Aorta (tissue), 5 donors: ENCODE measurements at regions of chr15 and their contacts with region 1.

Region 1: DNA sequence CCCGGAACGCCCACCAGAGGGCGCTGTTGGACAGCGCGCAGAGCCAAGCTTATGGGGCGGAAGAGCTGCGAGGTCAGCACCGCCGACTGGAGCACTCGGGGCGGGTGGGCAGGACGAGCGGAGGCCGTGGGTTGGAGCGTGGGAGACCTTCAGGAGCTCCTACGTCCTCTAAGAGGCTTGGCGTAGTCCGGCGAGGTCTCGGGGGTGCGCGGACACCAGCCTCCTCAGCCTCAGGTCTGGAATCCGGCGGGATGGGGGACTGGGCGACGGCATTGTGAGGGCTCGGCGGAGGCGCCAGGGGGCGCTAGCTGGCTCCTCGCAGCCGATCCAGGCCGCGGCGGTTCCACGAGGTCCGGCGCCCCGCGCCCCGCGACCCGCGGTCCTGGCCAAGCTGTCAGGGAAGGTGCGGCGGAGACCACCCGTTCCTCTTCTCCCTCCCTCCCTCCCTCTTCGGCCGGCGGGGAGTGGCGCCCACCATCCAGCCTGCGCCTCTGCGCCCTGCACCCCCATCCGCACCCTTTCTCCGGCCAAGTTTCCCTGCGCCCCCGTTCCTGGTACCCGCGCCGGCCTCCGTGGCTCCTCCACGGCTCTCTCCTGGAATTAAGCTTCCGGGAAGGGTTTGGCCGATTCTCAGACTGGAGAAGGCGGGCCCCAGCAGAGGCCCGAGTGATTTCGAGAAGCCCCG is 24.3 kb upstream of the POLG start:
- DNase-seq: peak; percentile 83 to 93
- ATAC-seq: peak; percentile 94
- H3K4me3 ChIP-seq: no peak overlapping the region
- H3K27ac ChIP-seq: no peak overlapping the region
- H3K4me1 ChIP-seq: no peaks in the 10 kb centered on the region
- H3K27me3 ChIP-seq: peaks cover 0 to 3% of the 10 kb centered on the region in 2 donors

Region 2: GRCh38 chr15:89430530-89431341 is 71.8 kb after region 1 on chr15:
- intact Hi-C with region 1: loop called (anchors 1 to 2 kb)
- DNase-seq: peak; percentile 88 to 96
- ATAC-seq: peak; percentile 93
- H3K4me3 ChIP-seq: peak overlapping the region in 1 of 2 donors; percentile 6
- H3K27ac ChIP-seq: no peak overlapping the region
- H3K4me1 ChIP-seq: no peaks in the 10 kb centered on the region
- H3K27me3 ChIP-seq: peaks cover 0 to 2% of the 10 kb centered on the region in 2 donors

Region 3: DNA sequence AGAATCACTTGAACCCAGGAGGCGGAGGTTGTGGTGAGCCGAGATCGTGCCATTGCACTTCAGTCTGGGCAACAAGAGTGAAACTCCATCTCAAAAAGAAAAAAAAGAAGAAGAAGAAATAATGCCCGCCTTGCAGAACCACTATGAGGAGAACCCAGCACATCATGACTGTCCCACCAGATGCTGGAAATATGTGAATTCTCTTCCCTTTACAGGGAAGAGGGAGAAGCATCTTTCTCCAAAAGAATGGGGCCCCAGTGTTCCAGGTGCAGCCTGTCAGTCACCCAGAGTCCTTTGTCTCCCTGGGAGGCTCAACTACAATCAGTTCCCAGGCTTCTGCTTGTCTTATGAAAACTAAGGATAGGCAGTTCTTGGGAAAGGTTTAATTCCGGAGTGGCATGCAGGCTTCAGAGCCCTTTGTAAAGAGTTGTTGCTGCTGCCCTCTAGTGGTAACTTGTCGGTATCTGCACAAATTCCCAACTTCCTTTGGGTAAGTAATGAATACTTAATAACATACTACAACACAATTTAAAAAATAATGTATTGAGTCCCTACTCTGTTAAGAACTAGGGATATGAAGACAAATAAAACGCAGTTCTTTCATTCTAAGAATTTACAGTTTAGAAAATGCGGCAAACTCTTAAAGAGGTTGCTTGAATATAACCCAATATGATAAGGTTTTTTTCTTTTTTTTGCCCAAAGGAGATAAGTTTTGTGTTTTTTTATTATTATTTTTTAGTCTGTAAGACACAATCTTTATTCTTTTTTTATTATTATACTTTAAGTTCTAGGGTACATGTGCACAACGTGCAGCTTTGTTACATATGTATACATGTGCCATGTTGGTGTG is 197.7 kb after region 1 on chr15:
- intact Hi-C with region 1: loop called in 1 of 2 experiments (anchors 10 kb)
- DNase-seq: no peak
- ATAC-seq: no peak
- H3K4me3 ChIP-seq: no peak overlapping the region
- H3K27ac ChIP-seq: no peak overlapping the region
- H3K4me1 ChIP-seq: no peaks in the 10 kb centered on the region
- H3K27me3 ChIP-seq: peaks cover 0 to 2% of the 10 kb centered on the region in 2 donors